Adrenal gland (tissue), 19 donors: ENCODE measurements at regions of chr12 and their contacts with region 1.

Region 1: DNA sequence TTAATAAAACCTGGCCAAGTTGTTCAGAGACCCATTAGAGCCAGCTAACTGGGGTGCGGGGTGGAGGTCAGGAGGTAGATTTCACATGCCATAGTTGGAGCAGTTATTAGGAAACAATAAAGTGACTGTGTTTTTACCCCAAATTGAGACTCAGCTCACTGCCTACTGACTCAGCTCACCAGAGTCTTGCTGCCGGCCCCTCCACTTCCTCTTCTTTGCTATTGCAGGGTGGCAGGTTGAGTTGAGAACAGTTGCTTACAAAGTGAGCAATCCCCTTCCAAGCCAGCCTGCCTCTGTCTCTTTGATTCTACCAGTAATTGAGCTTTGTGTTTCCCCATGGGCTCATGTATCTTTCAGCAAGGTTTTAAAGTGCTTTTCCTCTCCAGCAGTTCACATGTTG is 12.9 kb downstream of the ST8SIA1 start:
- DNase-seq: peak in 2 of 7 donors; percentile 12 to 18
- H3K4me3 ChIP-seq: no peak overlapping the region
- H3K27ac ChIP-seq: no peak overlapping the region
- H3K4me1 ChIP-seq: no peaks in the 10 kb centered on the region
- H3K27me3 ChIP-seq: no peaks in the 10 kb centered on the region
- CTCF ChIP-seq: no peak
- POLR2A ChIP-seq: no peak

Region 2: DNA sequence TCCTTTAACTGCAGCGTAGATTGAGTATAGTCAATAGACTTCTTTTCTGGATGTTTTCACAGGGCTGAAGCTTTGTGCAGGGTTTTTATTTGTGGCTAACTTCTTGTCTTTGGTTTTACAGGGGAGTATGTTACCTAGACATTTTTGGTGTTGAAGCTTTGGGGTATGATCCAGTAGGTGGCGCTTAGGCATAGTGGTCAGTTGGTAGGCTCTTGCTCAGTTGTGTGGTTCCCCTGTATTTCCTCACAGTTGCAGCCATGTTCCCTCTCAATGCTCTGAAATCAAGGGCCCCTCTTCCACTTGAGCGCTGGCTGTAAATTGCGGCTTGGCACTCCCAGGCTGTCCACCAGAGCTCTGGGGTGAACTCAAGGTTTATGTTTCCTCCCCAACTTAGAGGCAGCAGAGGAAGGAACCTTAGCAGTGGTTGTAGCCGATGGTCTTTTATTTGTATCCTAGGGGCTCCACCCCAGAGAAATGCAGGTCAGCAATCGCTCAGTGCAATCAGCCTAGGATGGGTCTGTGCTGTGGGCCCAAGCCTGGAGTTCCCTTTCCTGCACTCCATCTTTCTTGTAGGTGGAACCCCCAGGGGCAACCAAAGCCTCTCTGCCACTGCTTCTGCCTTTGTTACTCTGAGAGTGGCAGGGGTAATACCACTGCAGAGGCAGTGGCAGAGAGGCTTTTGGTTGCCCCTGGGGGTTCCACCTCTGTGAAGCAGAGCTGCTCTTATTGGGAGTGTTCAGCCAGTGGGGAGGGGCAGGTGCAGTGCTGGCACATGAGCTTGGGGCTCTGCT is 220.5 kb before region 1 on chr12:
- intact Hi-C with region 1: loop called in 1 of 2 experiments (anchors 10 kb)
- DNase-seq: peak; percentile 49 to 84 (median 54)
- H3K4me3 ChIP-seq: no peak overlapping the region
- H3K27ac ChIP-seq: no peak overlapping the region
- H3K4me1 ChIP-seq: peaks cover 0 to 3% of the 10 kb centered on the region in 2 donors
- H3K27me3 ChIP-seq: no peaks in the 10 kb centered on the region
- CTCF ChIP-seq: peak; percentile 40 to 73 (median 64)
- POLR2A ChIP-seq: no peak